Activated CD4-positive, alpha-beta memory T cell treated with anti-CD3 and anti-CD28 coated beads for 36 hours (primary cell): ENCODE measurements at regions of chr3 and their contacts with region 1.

Region 1: DNA sequence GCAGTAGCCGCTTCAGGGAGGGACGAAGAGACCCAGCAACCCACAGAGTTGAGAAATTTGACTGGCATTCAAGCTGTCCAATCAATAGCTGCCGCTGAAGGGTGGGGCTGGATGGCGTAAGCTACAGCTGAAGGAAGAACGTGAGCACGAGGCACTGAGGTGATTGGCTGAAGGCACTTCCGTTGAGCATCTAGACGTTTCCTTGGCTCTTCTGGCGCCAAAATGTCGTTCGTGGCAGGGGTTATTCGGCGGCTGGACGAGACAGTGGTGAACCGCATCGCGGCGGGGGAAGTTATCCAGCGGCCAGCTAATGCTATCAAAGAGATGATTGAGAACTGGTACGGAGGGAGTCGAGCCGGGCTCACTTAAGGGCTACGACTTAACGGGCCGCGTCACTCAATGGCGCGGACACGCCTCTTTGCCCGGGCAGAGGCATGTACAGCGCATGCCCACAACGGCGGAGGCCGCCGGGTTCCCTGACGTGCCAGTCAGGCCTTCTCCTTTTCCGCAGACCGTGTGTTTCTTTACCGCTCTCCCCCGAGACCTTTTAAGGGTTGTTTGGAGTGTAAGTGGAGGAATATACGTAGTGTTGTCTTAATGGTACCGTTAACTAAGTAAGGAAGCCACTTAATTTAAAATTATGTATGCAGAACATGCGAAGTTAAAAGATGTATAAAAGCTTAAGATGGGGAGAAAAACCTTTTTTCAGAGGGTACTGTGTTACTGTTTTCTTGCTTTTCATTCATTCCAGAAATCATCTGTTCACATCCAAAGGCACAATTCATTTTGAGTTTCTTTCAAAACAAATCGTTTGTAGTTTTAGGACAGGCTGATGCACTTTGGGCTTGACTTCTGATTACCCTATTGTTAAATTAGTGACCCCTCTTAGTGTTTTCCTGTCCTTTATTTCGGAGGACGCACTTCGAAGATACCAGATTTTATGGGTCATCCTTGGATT is at the start of gene MLH1:
- DNase-seq: peak; percentile 100
- H3K4me3 Mint-ChIP-seq: no peak within 1 kb of the TSS
- H3K27ac Mint-ChIP-seq: no peak within 1 kb of the TSS
- H3K4me1 Mint-ChIP-seq: peaks cover 38% of the 10 kb centered on the region
- H3K27me3 Mint-ChIP-seq: no peaks in the 10 kb centered on the region
- total RNA-seq, gene MLH1: 85.8 to 102 TPM

Region 2: DNA sequence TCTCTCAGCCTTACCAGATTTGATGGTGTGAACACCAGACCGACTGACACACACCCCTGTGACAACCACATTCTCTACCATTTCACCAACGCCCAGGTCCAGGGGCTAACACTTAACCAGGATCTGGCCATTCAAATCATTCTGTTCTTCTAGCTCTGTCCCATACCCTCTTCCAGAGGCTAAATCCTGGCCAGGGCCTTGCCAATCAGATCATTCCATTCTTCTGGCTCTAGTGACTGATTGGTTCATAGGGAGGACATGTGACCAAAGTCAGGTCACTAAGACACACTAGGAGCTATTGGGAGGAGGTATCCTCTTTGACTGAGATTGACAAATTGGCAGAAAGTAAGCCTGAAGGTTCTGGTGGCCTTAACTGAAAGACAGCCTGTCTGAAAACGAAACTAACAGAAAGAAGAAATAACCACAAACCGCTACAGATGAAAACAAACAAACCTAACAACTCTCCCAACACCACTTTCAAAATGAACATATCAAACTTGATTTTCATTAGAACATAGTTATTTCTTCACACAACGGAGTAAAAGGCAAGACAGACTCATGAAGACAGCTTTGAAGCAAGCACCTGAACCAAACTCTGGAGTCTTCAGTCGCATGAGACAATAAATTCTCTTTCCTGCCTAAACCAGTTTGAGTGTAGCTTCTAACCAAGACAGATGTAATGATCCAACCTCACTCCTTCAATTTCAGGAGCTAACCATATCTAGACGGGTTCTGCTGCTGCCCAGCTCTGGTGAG is 117.2 kb before region 1 on chr3:
- CTCF ChIA-PET with region 1: interaction called, 3 read pairs
- POLR2A ChIA-PET with region 1: no interaction called
- intact Hi-C with region 1: loop called (anchors 1 kb)
- DNase-seq: peak; percentile 26
- H3K4me3 Mint-ChIP-seq: peak overlapping the region; percentile 21
- H3K27ac Mint-ChIP-seq: peak overlapping the region; percentile 71
- H3K4me1 Mint-ChIP-seq: peaks cover 42% of the 10 kb centered on the region
- H3K27me3 Mint-ChIP-seq: peaks cover 3% of the 10 kb centered on the region

Region 3: DNA sequence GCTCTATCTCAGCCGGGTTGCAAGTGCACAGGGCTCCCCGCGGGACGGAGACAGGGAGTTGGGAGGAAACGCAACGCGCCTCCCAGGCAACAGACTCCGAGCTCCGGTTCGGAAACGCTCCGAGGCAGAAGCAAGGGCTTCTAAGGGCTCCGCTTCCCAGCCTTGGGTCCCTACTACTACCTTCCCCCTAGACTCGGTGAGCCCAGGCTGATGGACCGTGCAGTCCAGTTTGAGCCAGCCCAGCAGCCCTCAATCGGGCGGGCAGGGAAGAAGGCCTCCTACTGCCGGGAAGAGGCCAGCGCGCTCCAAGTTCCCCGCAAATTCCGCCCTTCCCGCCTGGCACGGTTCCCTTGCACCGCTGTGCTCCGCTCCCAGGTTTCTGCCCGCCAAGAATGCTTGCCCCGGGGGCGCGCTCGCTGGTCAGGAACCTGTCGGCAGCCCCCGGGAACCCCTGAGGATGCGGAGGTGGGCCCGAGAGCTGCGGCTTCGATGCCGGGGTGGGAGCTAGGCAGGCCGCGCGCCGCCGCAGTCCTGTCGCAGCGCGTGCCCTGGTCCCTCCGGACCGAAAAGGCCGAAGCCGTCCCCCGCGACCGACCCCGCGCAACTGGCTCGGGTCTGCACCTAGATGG is 49.5 kb before region 1 on chr3:
- CTCF ChIA-PET with region 1: no interaction called
- POLR2A ChIA-PET with region 1: interaction called, 12 read pairs
- intact Hi-C with region 1: loop called (anchors 1 kb)
- DNase-seq: peak; percentile 50
- H3K4me3 Mint-ChIP-seq: peak overlapping the region; percentile 80
- H3K27ac Mint-ChIP-seq: no peak overlapping the region
- H3K4me1 Mint-ChIP-seq: peaks cover 16% of the 10 kb centered on the region
- H3K27me3 Mint-ChIP-seq: no peaks in the 10 kb centered on the region

Region 4: GRCh38 chr3:37210230-37210629 is 216.6 kb after region 1 on chr3:
- CTCF ChIA-PET with region 1: no interaction called
- POLR2A ChIA-PET with region 1: no interaction called
- intact Hi-C with region 1: loop called (anchors 1 kb)
- DNase-seq: no peak
- H3K4me3 Mint-ChIP-seq: no peak overlapping the region
- H3K27ac Mint-ChIP-seq: no peak overlapping the region
- H3K4me1 Mint-ChIP-seq: peaks cover 3% of the 10 kb centered on the region
- H3K27me3 Mint-ChIP-seq: no peaks in the 10 kb centered on the region